SK-N-SH (cell line): ENCODE measurements at regions of chr16 and their contacts with region 1.

Region 1: GRCh38 chr16:57262841-57263540 is 17.9 kb downstream of the ARL2BP start:
- DNase-seq: peak; percentile 51
- H3K4me3 ChIP-seq: no peak overlapping the region
- H3K27ac ChIP-seq: peak overlapping the region in 1 of 2 experiments; percentile 55; a peak in 1 of 4 replicates
- H3K4me1 ChIP-seq: peaks cover 8 to 33% of the 10 kb centered on the region in 2 experiments; a peak in 2 of 4 replicates
- H3K27me3 ChIP-seq: no peaks in the 10 kb centered on the region
- CTCF ChIP-seq: no peak
- EP300 ChIP-seq: no peak
- RAD21 ChIP-seq: no peak

Region 2: GRCh38 chr16:57244767-57245471 is 18.1 kb before region 1 on chr16 and contains the start of gene ARL2BP:
- CTCF ChIA-PET with region 1: interaction called, 10 read pairs
- POLR2A ChIA-PET with region 1: interaction called, 4 read pairs
- DNase-seq: peak; percentile 99
- H3K4me3 ChIP-seq: peak within 1 kb of the TSS; percentile 79 to 89
- H3K27ac ChIP-seq: peak within 1 kb of the TSS; percentile 91 to 93
- H3K4me1 ChIP-seq: peaks cover 5 to 9% of the 10 kb centered on the region in 2 experiments; a peak in 2 of 4 replicates
- H3K27me3 ChIP-seq: no peaks in the 10 kb centered on the region
- CTCF ChIP-seq: peak; percentile 27; the same call in 1 of the 2 replicates
- EP300 ChIP-seq: no peak
- RAD21 ChIP-seq: no peak; the same call in 1 of the 2 replicates
- polyA plus RNA-seq, gene ARL2BP: 61.8 and 70.3 TPM in 2 replicates